HCT116 (cell line): ENCODE measurements at regions of chr17 and their contacts with region 1.

Region 1: GRCh38 chr17:74190172-74190571 is 13.3 kb upstream of the RPL38 start:
- DNase-seq: peak; percentile 66
- ATAC-seq: peak; percentile 97
- H3K4me3 ChIP-seq: no peak overlapping the region
- H3K27ac ChIP-seq: no peak overlapping the region
- H3K4me1 ChIP-seq: no peaks in the 10 kb centered on the region
- H3K27me3 ChIP-seq: peaks cover 25% of the 10 kb centered on the region; the same call in 1 of the 2 replicates
- CTCF ChIP-seq: no peak
- POLR2A ChIP-seq: no peak
- RAD21 ChIP-seq: no peak

Region 2: GRCh38 chr17:74203439-74204240 is 13.5 kb after region 1 on chr17 and contains the start of gene RPL38:
- CTCF ChIA-PET with region 1: interaction called, 55 read pairs
- POLR2A ChIA-PET with region 1: interaction called, 6 read pairs
- RAD21 ChIA-PET with region 1: no interaction called
- intact Hi-C with region 1: no loop called
- DNase-seq: peak; percentile 99
- ATAC-seq: peak; percentile 74
- H3K4me3 ChIP-seq: peak within 1 kb of the TSS; percentile 98 to 99
- H3K27ac ChIP-seq: peak within 1 kb of the TSS; percentile 65
- H3K4me1 ChIP-seq: peaks cover 11 to 48% of the 10 kb centered on the region in 2 experiments
- H3K27me3 ChIP-seq: no peaks in the 10 kb centered on the region
- CTCF ChIP-seq: peak; percentile 83 to 98 (median 98)
- POLR2A ChIP-seq: peak; percentile 98
- RAD21 ChIP-seq: no peak
- total RNA-seq, gene RPL38: 1,628 TPM